ENCODE measurements at regions of chr12 and their contacts with region 1.

Region 1: DNA sequence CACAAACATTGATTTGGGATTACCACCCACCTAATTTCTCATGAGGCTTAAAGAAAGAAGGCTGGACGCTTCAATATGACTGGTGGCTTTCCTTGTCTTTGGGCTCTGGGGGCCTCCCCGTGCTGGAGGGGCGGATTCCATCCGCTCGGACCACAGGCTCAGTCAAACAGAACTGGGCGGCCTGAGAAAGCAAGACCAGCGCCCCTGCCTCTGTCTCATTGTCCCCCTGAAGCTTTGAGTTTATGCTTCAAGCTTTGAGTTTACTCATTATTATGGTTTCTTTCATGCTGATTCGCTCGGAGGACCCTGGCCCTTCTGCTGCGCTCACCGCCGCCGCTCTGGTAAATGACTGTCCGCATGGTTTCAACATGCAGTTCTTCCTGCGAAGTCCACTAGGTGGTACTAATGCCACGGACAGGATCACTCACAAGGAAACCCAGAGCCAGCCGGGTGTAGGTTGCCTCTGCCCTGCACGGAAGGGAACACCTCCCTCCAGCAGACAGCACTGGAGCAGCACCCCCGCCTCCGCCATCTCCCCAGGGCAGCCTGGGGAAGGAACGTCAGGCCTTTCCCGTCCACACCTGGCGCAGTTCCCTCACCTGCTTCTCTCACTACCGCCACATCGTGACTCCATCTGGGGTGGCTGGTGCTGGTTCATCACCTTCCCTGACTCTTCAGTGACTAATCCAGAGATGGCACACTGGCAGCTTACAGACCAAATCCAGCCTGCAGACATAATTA is 13.2 kb upstream of the TIGAR start:
- DNase-seq: peak; percentile 79
- ATAC-seq: peak; percentile 96
- H3K4me3 ChIP-seq: peak overlapping the region; percentile 25 to 67 (median 43); a peak in 5 of 6 replicates
- H3K27ac ChIP-seq: no peak overlapping the region
- H3K4me1 ChIP-seq: peaks cover 34% of the 10 kb centered on the region
- H3K27me3 ChIP-seq: peaks cover 0 to 39% of the 10 kb centered on the region in 2 experiments; a peak in 3 of 5 replicates
- CTCF ChIP-seq: peak; percentile 97
- EP300 ChIP-seq: no peak
- POLR2A ChIP-seq: no peak
- RAD21 ChIP-seq: peak; percentile 81

Region 2: DNA sequence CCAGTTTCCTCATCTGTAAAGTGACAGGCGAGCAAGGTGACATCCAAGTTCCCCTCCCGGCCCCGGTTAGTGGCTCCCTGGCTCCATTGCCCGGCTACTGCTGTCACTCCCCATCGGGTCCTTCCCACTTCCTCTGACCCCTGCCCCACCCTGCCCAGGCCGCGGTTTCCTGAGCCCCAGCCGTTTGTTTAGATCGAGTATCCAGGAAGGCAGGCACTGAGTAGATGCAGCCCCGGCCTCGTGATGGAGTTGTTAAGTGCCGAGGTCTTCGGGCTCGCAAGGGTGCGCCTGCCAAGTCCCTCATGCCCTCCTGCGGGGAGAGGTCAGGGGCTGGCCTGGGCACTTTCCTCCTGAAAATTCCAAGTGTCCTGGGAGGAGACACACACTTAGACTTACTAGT is 1293.1 kb before region 1 on chr12:
- CTCF ChIA-PET with region 1: no interaction called
- POLR2A ChIA-PET with region 1: no interaction called
- in situ Hi-C with region 1: no loop called
- intact Hi-C with region 1: no loop called
- DNase-seq: no peak
- ATAC-seq: no peak
- H3K4me3 ChIP-seq: no peak overlapping the region
- H3K27ac ChIP-seq: no peak overlapping the region
- H3K4me1 ChIP-seq: no peaks in the 10 kb centered on the region
- H3K27me3 ChIP-seq: no peaks in the 10 kb centered on the region
- CTCF ChIP-seq: no peak
- EP300 ChIP-seq: no peak
- POLR2A ChIP-seq: no peak
- RAD21 ChIP-seq: no peak

Region 3: DNA sequence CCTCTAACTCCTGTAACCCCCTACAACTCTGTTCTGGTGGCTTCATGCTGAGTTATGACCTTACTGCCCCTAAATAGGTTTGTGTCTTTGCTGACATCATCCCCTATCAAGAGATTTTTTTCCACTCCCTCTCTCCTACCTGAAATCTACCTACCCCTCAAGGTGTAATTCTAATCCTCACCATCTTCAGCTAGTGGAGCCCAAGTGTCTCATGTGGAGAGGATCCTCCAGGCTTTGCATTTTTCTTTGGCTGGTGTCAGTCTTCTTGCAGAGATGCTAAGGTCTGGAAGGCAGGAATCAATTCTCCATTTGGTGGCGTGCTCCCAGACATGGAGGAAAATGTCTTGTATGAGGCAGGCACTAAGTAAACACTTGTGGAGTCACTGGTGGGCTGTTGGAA is 891.6 kb before region 1 on chr12:
- CTCF ChIA-PET with region 1: no interaction called
- POLR2A ChIA-PET with region 1: no interaction called
- in situ Hi-C with region 1: no loop called
- intact Hi-C with region 1: no loop called
- DNase-seq: no peak
- ATAC-seq: no peak
- H3K4me3 ChIP-seq: no peak overlapping the region
- H3K27ac ChIP-seq: no peak overlapping the region
- H3K4me1 ChIP-seq: no peaks in the 10 kb centered on the region
- H3K27me3 ChIP-seq: peaks cover 0 to 18% of the 10 kb centered on the region in 2 experiments; a peak in 3 of 5 replicates
- CTCF ChIP-seq: no peak
- EP300 ChIP-seq: no peak
- POLR2A ChIP-seq: no peak
- RAD21 ChIP-seq: no peak

Region 4: DNA sequence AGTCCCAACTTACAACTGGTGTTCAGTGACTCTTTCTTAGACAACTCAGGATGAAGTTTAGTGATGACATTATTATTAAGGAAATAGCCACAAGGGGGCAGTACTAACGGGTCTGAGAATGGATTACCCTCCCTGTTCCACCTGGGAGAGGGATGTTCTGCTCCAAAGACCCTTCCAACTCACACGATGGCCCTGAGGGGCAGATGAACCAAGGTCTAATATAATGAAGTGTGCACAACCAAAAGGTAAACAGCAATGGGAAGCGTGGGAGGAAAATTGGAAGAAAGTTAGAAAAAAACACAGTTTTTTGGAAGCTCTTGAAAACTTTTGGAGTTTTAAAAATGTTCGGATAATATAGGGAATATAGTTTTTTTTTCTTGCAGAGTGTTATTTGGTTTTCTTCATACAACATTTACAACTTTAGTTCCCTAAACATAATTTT is 113.8 kb after region 1 on chr12:
- CTCF ChIA-PET with region 1: no interaction called
- POLR2A ChIA-PET with region 1: no interaction called
- in situ Hi-C with region 1: loop called (anchors 10 kb)
- intact Hi-C with region 1: no loop called
- DNase-seq: peak; percentile 35
- ATAC-seq: peak; percentile 72
- H3K4me3 ChIP-seq: no peak overlapping the region
- H3K27ac ChIP-seq: no peak overlapping the region
- H3K4me1 ChIP-seq: no peaks in the 10 kb centered on the region
- H3K27me3 ChIP-seq: peaks cover 0 to 31% of the 10 kb centered on the region in 2 experiments; a peak in 3 of 5 replicates
- CTCF ChIP-seq: peak; percentile 67
- EP300 ChIP-seq: no peak
- POLR2A ChIP-seq: no peak
- RAD21 ChIP-seq: no peak

Region 5: GRCh38 chr12:4538207-4539160 is 230.7 kb after region 1 on chr12 and contains the start of gene RAD51AP1:
- CTCF ChIA-PET with region 1: no interaction called
- POLR2A ChIA-PET with region 1: no interaction called
- in situ Hi-C with region 1: loop called (anchors 10 kb)
- intact Hi-C with region 1: no loop called
- DNase-seq: peak; percentile 93
- ATAC-seq: peak; percentile 99
- H3K4me3 ChIP-seq: peak within 1 kb of the TSS; percentile 79 to 91 (median 84)
- H3K27ac ChIP-seq: peak within 1 kb of the TSS; percentile 89
- H3K4me1 ChIP-seq: peaks cover 22% of the 10 kb centered on the region
- H3K27me3 ChIP-seq: no peaks in the 10 kb centered on the region; a peak in 1 of 5 replicates
- CTCF ChIP-seq: no peak
- EP300 ChIP-seq: peak in 1 of 2 experiments; percentile 58; a peak in 2 of 4 replicates
- POLR2A ChIP-seq: peak in 1 of 2 experiments; percentile 75; a peak in 2 of 4 replicates
- RAD21 ChIP-seq: no peak
- total RNA-seq, gene RAD51AP1: 49.3 and 79.3 TPM in 2 replicates